ENCODE measurements at regions of chr13 and their contacts with region 1.

Region 1: GRCh38 chr13:50123862-50124536 is 108.8 kb downstream of the KCNRG start:
- DNase-seq: peak; percentile 95
- H3K4me3 ChIP-seq: peak overlapping the region; percentile 68 to 91 (median 75)
- H3K27ac ChIP-seq: peak overlapping the region; percentile 93
- H3K4me1 ChIP-seq: peaks cover 8% of the 10 kb centered on the region
- H3K27me3 ChIP-seq: peaks cover 4 to 7% of the 10 kb centered on the region in 2 experiments
- CTCF ChIP-seq: no peak
- POLR2A ChIP-seq: peak; percentile 77

Region 2: GRCh38 chr13:49792550-49793324 is 331.3 kb before region 1 on chr13 and contains the start of gene KPNA3:
- CTCF ChIA-PET with region 1: no interaction called
- POLR2A ChIA-PET with region 1: no interaction called
- dilution Hi-C with region 1: no loop called
- intact Hi-C with region 1: loop called (anchors 5 kb)
- DNase-seq: peak; percentile 95
- H3K4me3 ChIP-seq: peak within 1 kb of the TSS; percentile 89 to 96 (median 90)
- H3K27ac ChIP-seq: peak within 1 kb of the TSS; percentile 91
- H3K4me1 ChIP-seq: peaks cover 24% of the 10 kb centered on the region
- H3K27me3 ChIP-seq: peaks cover 0 to 3% of the 10 kb centered on the region in 2 experiments
- CTCF ChIP-seq: no peak
- POLR2A ChIP-seq: peak; percentile 68
- total RNA-seq, gene KPNA3: 56.2 and 60.4 TPM in 2 replicates

Region 3: DNA sequence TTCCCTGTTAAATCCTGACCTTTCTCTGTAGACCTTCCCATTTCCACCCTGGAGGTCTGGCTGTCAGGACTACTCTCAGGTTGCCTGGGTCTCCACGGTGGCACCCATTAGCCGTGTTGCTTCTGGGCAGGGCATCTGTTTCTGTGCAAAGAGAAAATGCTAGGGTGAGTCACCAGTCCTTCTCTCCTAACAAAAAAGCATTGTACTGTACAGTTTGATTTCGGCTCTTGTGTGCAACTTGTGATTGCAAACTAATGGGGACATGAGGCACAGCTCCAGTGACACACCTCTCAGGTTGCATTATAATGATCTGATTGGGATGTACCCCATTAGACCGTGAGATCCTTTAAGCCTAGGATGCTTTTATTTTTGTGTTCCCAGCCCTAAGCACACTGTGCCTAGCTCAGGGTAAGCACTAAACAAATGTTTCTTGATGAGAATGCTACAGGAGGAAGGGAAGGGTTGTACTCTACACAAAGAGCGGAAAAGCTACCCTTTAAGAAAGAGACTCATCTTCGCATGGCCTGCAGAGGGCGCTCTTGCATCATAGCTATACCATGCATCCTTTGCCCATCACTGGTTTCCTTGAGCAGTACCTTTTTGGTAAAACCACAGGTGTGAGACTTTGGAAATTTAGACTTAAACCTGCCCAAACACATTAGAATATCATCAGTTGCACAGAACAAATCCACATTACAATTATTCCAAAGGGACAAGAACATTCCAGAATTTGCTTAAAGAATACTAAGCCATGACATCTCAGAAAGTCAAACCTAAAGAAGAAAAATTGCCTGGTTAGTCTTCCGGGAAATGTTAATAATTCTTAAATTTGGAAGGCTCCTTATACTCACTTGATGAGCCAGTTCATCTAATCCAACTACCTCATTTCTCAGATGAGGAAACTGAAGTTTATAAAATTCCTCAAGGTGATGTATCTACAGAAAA is 147.4 kb before region 1 on chr13:
- CTCF ChIA-PET with region 1: interaction called, 5 read pairs
- POLR2A ChIA-PET with region 1: no interaction called
- dilution Hi-C with region 1: no loop called
- intact Hi-C with region 1: loop called (anchors 5 kb)
- DNase-seq: peak; percentile 77
- H3K4me3 ChIP-seq: no peak overlapping the region
- H3K27ac ChIP-seq: no peak overlapping the region
- H3K4me1 ChIP-seq: no peaks in the 10 kb centered on the region
- H3K27me3 ChIP-seq: no peaks in the 10 kb centered on the region
- CTCF ChIP-seq: peak; percentile 88 to 90
- POLR2A ChIP-seq: no peak

Region 4: DNA sequence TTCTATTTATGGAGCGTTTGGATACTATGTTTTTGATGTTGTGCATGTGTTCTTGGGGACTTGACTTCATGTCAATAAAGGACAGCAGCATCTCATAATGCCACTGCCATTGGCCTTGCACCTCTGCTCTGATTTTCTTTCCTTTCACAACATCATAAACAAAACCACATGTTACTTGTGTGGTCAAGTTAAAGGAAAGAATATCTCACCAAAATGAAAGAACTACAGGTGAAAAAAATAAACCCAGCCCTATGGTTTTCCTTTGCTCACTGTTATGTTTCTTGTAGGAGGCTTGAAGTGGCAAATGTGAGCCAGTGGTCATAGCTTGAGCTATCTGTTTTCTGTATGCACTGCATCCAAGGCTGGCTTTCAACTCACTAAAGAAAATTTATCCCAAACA is 131.6 kb after region 1 on chr13:
- CTCF ChIA-PET with region 1: no interaction called
- POLR2A ChIA-PET with region 1: no interaction called
- dilution Hi-C with region 1: no loop called
- intact Hi-C with region 1: no loop called
- DNase-seq: no peak
- H3K4me3 ChIP-seq: no peak overlapping the region
- H3K27ac ChIP-seq: no peak overlapping the region
- H3K4me1 ChIP-seq: no peaks in the 10 kb centered on the region
- H3K27me3 ChIP-seq: no peaks in the 10 kb centered on the region
- CTCF ChIP-seq: no peak
- POLR2A ChIP-seq: no peak

Region 5: DNA sequence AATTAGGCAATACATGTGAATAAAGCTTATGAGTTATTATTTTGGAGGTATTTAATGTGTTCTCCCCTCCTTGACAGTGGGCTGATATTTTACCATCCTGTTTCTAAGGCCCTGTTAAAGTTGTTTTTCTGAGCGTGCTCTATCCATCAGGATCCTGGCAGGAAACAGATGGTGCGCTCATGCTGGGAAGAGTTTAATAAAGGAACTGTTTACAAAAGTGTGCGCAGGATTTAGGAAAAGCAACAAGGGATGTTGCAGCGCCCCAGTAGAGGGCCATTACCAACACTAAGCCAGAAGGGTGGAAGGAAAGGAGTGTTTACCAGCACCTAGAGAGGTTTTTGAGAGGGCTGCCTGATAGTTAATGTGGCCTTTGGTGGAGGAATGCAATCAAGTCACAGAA is 265.7 kb after region 1 on chr13:
- CTCF ChIA-PET with region 1: no interaction called
- POLR2A ChIA-PET with region 1: no interaction called
- dilution Hi-C with region 1: no loop called
- intact Hi-C with region 1: loop called (anchors 2 kb)
- DNase-seq: peak; percentile 92
- H3K4me3 ChIP-seq: no peak overlapping the region
- H3K27ac ChIP-seq: peak overlapping the region; percentile 25
- H3K4me1 ChIP-seq: peaks cover 38% of the 10 kb centered on the region
- H3K27me3 ChIP-seq: no peaks in the 10 kb centered on the region
- CTCF ChIP-seq: no peak
- POLR2A ChIP-seq: no peak

Region 6: GRCh38 chr13:50457415-50458393 is 333.7 kb after region 1 on chr13:
- CTCF ChIA-PET with region 1: no interaction called
- POLR2A ChIA-PET with region 1: interaction called, 9 read pairs
- dilution Hi-C with region 1: no loop called
- intact Hi-C with region 1: loop called (anchors 1 kb)
- DNase-seq: no peak
- H3K4me3 ChIP-seq: no peak overlapping the region
- H3K27ac ChIP-seq: no peak overlapping the region
- H3K4me1 ChIP-seq: no peaks in the 10 kb centered on the region
- H3K27me3 ChIP-seq: no peaks in the 10 kb centered on the region
- CTCF ChIP-seq: no peak
- POLR2A ChIP-seq: no peak

Region 7: DNA sequence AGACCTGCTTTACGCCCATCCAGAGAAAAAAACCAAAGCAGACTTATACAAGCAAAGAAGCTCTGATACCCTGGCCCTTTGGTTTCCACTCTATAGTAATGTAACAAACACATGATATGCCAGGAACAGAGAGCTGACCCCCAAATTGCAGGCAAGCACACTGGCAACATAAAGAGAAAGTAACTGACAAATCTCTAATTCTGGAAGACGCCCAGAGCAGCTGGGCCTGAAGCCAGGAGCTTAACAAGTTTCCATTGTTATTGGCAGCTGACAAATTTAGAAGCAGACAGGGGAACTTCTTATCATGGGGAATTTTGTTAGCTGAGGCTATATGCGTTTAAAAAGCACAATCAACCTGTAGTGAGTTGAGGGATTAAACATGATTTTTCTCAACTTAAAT is 561.5 kb after region 1 on chr13:
- CTCF ChIA-PET with region 1: no interaction called
- POLR2A ChIA-PET with region 1: no interaction called
- dilution Hi-C with region 1: no loop called
- intact Hi-C with region 1: loop called (anchors 10 kb)
- DNase-seq: peak; percentile 97
- H3K4me3 ChIP-seq: peak overlapping the region in 1 of 3 experiments; percentile 35
- H3K27ac ChIP-seq: peak overlapping the region; percentile 87
- H3K4me1 ChIP-seq: peaks cover 39% of the 10 kb centered on the region
- H3K27me3 ChIP-seq: no peaks in the 10 kb centered on the region
- CTCF ChIP-seq: no peak
- POLR2A ChIP-seq: no peak